ENCODE measurements at regions of chr21 and their contacts with region 1.

Region 1: GRCh38 chr21:38208118-38208517 is 48.7 kb upstream of the KCNJ15 start:
- DNase-seq: no peak
- H3K4me3 Mint-ChIP-seq: no peak overlapping the region
- H3K27ac Mint-ChIP-seq: no peak overlapping the region
- H3K4me1 Mint-ChIP-seq: peaks cover 4% of the 10 kb centered on the region
- H3K27me3 Mint-ChIP-seq: peaks cover 37% of the 10 kb centered on the region

Region 2: GRCh38 chr21:38219049-38219628 is 11.0 kb after region 1 on chr21:
- CTCF ChIA-PET with region 1: interaction called, 13 read pairs
- DNase-seq: peak; percentile 76
- H3K4me3 Mint-ChIP-seq: no peak overlapping the region
- H3K27ac Mint-ChIP-seq: no peak overlapping the region
- H3K4me1 Mint-ChIP-seq: peaks cover 3% of the 10 kb centered on the region
- H3K27me3 Mint-ChIP-seq: peaks cover 4% of the 10 kb centered on the region